ENCODE measurements at regions of chr4 and their contacts with region 1.

Region 1: DNA sequence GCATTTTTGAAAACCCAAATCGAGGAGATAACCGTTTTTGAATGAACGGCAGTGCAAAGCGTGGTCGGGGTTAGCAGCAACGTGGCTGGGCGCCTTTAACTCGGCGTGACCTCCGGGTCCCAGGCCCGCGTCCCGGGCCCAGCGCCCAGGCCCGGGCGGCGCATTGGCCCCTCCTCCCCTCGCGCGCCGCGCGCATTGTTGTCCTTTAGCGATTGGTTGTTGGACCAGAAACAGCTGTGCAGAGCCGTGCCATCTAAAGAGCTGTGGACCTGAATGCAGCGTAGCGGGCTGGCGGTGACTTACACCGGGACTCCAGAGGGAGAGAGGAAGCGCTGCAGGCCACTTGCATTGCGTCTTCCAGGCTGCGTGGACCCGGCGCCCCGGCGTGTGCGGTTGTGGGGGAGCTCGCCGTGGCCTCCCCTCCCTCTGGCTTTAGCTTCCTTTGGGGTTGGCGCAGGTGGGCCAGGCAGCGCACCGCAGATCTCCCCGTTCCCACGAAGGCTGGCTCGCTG is at the start of gene STOX2:
- DNase-seq: peak; percentile 92
- total RNA-seq, gene STOX2: 9.4 TPM

Region 2: DNA sequence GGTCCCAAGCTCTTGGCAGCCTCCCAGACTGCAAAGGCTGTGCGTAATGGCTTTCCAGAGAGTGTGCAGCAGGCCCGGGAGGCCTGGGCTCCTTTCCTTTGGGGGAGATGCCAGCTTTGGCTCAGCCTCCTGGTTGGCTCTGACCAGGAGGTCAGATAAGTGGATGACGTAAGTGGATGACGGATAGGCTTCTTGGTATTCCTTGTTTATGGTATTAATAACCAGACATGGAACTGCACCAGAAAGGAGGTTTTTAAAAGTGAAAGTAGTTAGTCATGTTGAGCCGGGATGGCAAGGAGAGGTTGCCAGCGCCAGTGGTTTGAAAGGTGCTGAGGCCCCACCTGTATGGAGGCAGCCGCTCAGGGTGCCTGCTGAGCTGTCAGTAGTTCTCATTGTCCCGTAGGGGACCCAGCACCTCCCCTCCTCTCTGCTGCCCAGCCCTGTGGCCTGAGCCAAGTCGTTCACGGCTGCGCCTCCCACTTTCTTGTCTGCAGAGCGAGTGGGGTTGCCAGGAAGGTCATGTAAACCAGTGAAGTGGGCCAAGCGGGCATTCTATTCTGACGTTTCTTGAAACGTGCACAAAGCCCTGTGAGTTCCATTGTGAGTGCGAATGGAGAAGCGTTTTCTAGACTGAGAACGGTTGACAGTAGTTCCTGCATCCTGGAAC is 28.7 kb before region 1 on chr4:
- intact Hi-C with region 1: loop called (anchors 1 kb)
- DNase-seq: peak; percentile 88

Region 3: DNA sequence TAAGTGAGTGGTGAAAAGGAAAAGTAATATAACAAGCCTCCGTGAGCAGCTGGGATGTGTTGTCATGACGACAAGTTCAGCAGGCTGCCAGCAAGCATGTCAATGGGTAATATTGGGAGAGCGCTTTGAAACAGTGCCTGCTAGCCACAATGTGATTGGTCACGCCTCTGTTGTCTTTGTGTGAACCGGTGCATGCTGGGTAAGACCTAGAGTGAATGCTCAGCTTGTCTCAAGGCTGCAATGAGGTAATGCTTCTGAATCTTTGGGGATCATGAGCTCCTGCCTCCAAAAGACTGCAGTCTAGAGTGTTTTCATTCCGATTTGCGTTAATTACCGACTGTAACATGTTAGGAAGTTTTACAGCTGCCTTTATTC is 54.9 kb after region 1 on chr4:
- intact Hi-C with region 1: loop called (anchors 1 kb)
- DNase-seq: no peak

Region 4: GRCh38 chr4:183987987-183988392 is 82.9 kb after region 1 on chr4:
- intact Hi-C with region 1: loop called (anchors 2 kb)
- DNase-seq: peak; percentile 90

Measured in cardiac septum (tissue), 1 donor.